HEK293 (cell line): ENCODE measurements at regions of chr5 and their contacts with region 1.

Region 1: GRCh38 chr5:34915139-34915855 is at the starts of genes BRIX1 and RAD1:
- H3K4me3 ChIP-seq: peak within 1 kb of the TSS; percentile 78
- H3K27ac ChIP-seq: peak within 1 kb of the TSS; percentile 95
- H3K4me1 ChIP-seq: peaks cover 6% of the 10 kb centered on the region; the same call in 1 of the 2 replicates
- CTCF ChIP-seq: peak; percentile 35; the same call in 1 of the 2 replicates

Region 2: GRCh38 chr5:34838785-34839714 is 76.2 kb before region 1 on chr5 and contains the start of gene TTC23L:
- CTCF ChIA-PET with region 1: no interaction called
- POLR2A ChIA-PET with region 1: interaction called, 15 read pairs
- H3K4me3 ChIP-seq: peak within 1 kb of the TSS; percentile 71
- H3K27ac ChIP-seq: peak within 1 kb of the TSS; percentile 58
- H3K4me1 ChIP-seq: no peaks in the 10 kb centered on the region
- CTCF ChIP-seq: no peak

Region 3: DNA sequence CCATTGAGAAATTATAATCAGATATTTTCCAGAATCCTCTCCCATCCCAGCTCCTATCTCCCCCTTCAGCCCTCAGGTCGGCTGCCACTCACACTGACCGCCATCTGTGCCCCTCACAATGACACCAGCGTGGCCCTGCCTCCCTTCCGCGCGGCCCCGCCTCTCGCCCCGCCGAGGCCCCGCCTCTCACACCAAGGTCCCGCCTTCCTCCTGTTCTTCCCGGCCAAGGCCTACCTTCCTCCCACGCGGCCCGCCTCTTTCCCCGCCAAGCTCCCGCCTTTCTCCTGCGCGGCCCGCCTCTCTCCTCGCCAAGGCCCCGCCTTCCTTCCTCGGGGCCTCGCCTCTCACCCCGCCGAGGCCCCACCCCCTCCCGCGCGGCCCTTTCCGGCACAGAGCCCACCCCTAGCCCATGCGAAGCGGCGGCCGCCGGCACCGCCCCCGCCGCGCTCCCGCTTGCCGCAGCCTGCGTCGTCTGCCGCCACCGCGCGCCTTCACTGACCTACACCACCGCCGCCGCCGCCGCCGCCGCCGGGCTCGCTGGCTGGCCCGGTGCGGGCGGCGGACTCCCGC is 13.9 kb after region 1 on chr5 and contains the start of gene DNAJC21:
- CTCF ChIA-PET with region 1: interaction called, 4 read pairs
- POLR2A ChIA-PET with region 1: interaction called, 152 read pairs
- H3K4me3 ChIP-seq: peak within 1 kb of the TSS; percentile 98
- H3K27ac ChIP-seq: peak within 1 kb of the TSS; percentile 92
- H3K4me1 ChIP-seq: peaks cover 12% of the 10 kb centered on the region; the same call in 1 of the 2 replicates
- CTCF ChIP-seq: no peak

Region 4: GRCh38 chr5:35151146-35151920 is 236.0 kb after region 1 on chr5:
- CTCF ChIA-PET with region 1: no interaction called
- POLR2A ChIA-PET with region 1: no interaction called
- H3K4me3 ChIP-seq: no peak overlapping the region
- H3K27ac ChIP-seq: no peak overlapping the region
- H3K4me1 ChIP-seq: no peaks in the 10 kb centered on the region
- CTCF ChIP-seq: no peak